OCI-LY7 (cell line): ENCODE measurements at regions of chr18 and their contacts with region 1.

Region 1: GRCh38 chr18:267688-268552 is at the start of gene THOC1:
- DNase-seq: peak; percentile 94
- H3K4me3 ChIP-seq: peak within 1 kb of the TSS; percentile 98
- H3K27ac ChIP-seq: peak within 1 kb of the TSS; percentile 74
- H3K4me1 ChIP-seq: peaks cover 24% of the 10 kb centered on the region
- CTCF ChIP-seq: no peak
- total RNA-seq, gene THOC1: 66.9 and 74.6 TPM in 2 replicates

Region 2: GRCh38 chr18:158128-159036 is 109.5 kb before region 1 on chr18 and contains the start of gene USP14:
- CTCF ChIA-PET with region 1: no interaction called
- POLR2A ChIA-PET with region 1: interaction called, 8 read pairs
- intact Hi-C with region 1: loop called (anchors 1 kb)
- DNase-seq: peak; percentile 97
- H3K4me3 ChIP-seq: peak within 1 kb of the TSS; percentile 94
- H3K27ac ChIP-seq: peak within 1 kb of the TSS; percentile 60
- H3K4me1 ChIP-seq: peaks cover 30% of the 10 kb centered on the region
- CTCF ChIP-seq: 0 out of 2 replicates have a peak, but pooled peaks have one; percentile 15
- total RNA-seq, gene USP14: 18.4 and 21.3 TPM in 2 replicates

Region 3: DNA sequence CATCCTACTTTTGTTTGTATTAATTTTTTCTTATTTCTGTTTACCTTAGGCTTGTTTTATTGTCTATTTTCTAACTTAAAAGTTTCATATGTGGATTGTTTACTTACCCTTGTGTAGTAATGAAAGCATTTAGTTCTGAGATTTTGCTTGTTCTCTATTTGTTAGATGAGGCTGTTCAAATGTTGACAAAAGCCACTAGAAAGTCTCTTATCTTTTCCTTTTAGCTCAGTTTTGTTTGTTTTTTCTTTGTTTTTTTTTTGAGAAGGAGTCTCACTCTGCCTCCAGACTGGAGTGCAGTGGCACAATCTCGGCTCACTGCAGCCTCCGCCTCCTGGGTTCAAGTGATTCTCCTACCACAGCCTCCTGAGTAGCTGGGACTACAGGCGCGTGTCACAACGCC is 78.7 kb before region 1 on chr18:
- CTCF ChIA-PET with region 1: no interaction called
- POLR2A ChIA-PET with region 1: no interaction called
- intact Hi-C with region 1: loop called (anchors 5 kb)
- DNase-seq: no peak
- H3K4me3 ChIP-seq: no peak overlapping the region
- H3K27ac ChIP-seq: no peak overlapping the region
- H3K4me1 ChIP-seq: no peaks in the 10 kb centered on the region
- CTCF ChIP-seq: no peak

Region 4: DNA sequence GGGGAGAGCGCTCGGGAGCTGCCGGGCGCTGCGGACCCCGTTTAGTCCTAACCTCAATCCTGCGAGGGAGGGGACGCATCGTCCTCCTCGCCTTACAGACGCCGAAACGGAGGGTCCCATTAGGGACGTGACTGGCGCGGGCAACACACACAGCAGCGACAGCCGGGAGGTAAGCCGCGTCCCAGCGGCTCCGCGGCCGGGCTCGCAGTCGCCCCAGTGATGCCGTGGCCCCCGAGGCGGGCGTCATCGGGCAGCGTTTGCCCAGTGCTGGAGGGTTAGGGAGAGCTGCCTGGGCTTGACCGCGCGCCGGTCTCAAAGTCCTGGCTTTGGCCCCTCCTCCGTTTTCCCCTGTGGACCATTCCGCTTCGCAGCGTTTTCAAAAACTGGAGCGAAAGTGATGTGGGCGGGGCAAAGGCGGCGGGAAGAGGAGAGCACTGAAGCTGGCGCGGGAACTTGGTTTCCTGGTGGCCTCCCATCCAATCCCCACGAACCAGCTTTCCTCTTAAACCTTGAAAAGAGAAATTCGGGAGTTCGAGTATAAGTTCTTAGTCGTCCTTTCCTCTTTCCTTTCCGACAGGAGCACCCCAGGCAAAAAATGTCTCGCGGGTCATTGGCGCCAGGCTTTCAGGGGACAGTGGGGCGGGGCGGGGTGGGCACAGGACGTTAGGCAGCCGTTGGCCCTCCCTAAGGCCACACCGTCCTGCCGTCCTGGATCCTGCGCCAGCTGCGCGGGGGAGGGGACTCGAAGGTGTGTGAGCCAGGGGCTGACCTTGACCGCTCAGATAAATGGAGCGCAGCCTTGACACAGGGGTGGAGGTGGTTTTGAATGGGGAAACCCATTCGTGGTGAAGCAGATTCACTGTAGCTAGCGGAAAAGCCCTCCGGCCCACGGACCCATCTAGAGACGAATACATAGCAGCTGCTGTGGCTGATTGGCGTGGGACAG is 390.4 kb after region 1 on chr18:
- CTCF ChIA-PET with region 1: no interaction called
- POLR2A ChIA-PET with region 1: interaction called, 9 read pairs
- intact Hi-C with region 1: loop called (anchors 1 kb)
- DNase-seq: peak; percentile 88
- H3K4me3 ChIP-seq: peak overlapping the region; percentile 97
- H3K27ac ChIP-seq: peak overlapping the region; percentile 91
- H3K4me1 ChIP-seq: peaks cover 24% of the 10 kb centered on the region
- CTCF ChIP-seq: no peak